T-cell (primary cell): ENCODE measurements at regions of chr9 and their contacts with region 1.

Region 1: GRCh38 chr9:72763022-72763421 is 189.8 kb downstream of the ALDH1A1 start:
- DNase-seq: no peak
- ATAC-seq: no peak
- H3K4me3 ChIP-seq: no peak overlapping the region
- H3K4me3 Mint-ChIP-seq: no peak overlapping the region
- H3K27ac ChIP-seq: no peak overlapping the region
- H3K27ac Mint-ChIP-seq: no peak overlapping the region
- H3K4me1 ChIP-seq: no peaks in the 10 kb centered on the region
- H3K4me1 Mint-ChIP-seq: no peaks in the 10 kb centered on the region
- H3K27me3 ChIP-seq: peaks cover 0 to 2% of the 10 kb centered on the region in 2 experiments
- H3K27me3 Mint-ChIP-seq: peaks cover 12 to 22% of the 10 kb centered on the region in 2 donors

Region 2: DNA sequence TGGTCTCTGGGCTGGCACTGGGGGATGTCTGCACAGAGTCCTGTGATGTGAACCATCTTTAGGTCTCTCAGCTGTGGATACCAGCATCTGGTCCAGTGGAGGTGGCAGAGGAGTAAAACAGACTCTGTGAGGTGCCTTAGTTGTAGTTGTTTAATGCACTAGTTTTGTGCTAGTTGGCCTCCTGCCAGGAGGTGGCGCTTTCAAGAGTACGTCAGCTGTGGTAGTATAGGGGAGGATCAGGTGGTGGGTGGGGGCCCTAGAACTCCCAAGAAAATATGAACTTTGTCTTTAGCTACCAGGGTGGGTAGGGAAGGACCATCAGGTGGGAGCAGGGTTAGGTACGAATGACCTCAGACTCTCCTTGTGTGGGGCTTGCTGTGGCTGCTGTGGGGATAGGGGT is 44.5 kb before region 1 on chr9:
- CTCF ChIA-PET with region 1: no interaction called
- POLR2A ChIA-PET with region 1: interaction called in 1 of 2 experiments, 11 read pairs
- DNase-seq: no peak
- ATAC-seq: no peak
- H3K4me3 ChIP-seq: no peak overlapping the region
- H3K4me3 Mint-ChIP-seq: no peak overlapping the region
- H3K27ac ChIP-seq: no peak overlapping the region
- H3K27ac Mint-ChIP-seq: no peak overlapping the region
- H3K4me1 ChIP-seq: no peaks in the 10 kb centered on the region
- H3K4me1 Mint-ChIP-seq: no peaks in the 10 kb centered on the region
- H3K27me3 ChIP-seq: peaks cover 0 to 16% of the 10 kb centered on the region in 2 experiments
- H3K27me3 Mint-ChIP-seq: peaks cover 6 to 13% of the 10 kb centered on the region in 2 donors